ENCODE measurements at regions of chr15 and their contacts with region 1.

Region 1: DNA sequence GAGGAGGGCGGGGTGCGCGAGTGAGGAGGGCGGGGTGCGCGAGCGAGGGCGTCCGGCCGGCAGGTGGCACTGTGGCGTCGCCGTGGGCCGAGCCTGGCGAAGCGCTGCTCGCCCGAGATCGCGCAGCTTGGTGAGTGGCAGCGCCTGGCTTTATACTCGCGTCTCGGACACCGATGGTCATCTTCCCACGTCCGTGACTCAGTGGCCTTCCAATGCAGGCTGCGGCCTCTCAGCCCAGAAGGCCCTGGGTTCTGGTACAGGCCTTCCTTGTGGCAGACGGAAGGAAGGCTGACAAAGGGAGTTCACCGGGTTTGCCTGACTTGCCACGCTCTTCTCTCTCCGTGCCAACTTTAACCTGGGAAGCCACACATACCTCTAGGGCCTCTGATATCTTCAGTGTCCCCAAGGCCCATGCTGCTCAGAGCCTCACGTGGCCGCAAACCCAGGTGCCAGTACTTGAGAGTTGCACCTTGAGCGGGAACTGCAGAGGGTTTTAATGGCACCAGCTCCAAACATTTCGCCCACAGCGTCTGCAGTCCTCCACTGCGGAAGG is 195.3 kb upstream of the LYSMD4 start:
- DNase-seq: peak; percentile 83
- H3K4me3 Mint-ChIP-seq: peak overlapping the region; percentile 79
- H3K27ac Mint-ChIP-seq: peak overlapping the region; percentile 56
- H3K4me1 Mint-ChIP-seq: peaks cover 13% of the 10 kb centered on the region
- H3K27me3 Mint-ChIP-seq: no peaks in the 10 kb centered on the region

Region 2: GRCh38 chr15:99275525-99276128 is 652.9 kb before region 1 on chr15:
- CTCF ChIA-PET with region 1: no interaction called
- intact Hi-C with region 1: loop called (anchors 10 kb)
- DNase-seq: no peak
- H3K4me3 Mint-ChIP-seq: no peak overlapping the region
- H3K27ac Mint-ChIP-seq: no peak overlapping the region
- H3K4me1 Mint-ChIP-seq: peaks cover 27% of the 10 kb centered on the region
- H3K27me3 Mint-ChIP-seq: no peaks in the 10 kb centered on the region

Region 3: GRCh38 chr15:99733268-99734039 is 195.1 kb before region 1 on chr15 and contains the start of gene LYSMD4:
- CTCF ChIA-PET with region 1: no interaction called
- intact Hi-C with region 1: loop called (anchors 5 kb)
- DNase-seq: peak; percentile 99
- H3K4me3 Mint-ChIP-seq: peak within 1 kb of the TSS; percentile 81
- H3K27ac Mint-ChIP-seq: peak within 1 kb of the TSS; percentile 86
- H3K4me1 Mint-ChIP-seq: peaks cover 22% of the 10 kb centered on the region
- H3K27me3 Mint-ChIP-seq: no peaks in the 10 kb centered on the region
- total RNA-seq, gene LYSMD4: 4.9 TPM

Region 4: DNA sequence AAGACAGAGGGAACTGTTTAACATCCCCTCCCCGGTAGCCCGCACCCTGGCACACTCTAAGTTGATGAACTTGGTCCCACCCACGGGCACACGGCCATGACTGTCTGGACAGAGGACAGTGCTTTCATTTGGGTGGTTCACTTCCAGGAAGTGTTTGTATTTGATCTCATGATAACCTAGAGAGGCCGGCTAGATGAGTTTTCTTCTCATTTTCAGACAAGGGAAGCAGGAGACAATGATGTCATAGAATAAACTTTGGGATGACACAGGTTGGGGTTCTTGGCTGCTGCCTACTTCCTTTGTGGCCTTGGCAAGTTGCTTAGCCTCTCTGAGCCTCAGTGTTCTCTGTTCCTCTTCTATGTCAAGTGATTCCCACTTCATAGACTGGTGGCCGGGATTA is 179.1 kb before region 1 on chr15:
- CTCF ChIA-PET with region 1: no interaction called
- intact Hi-C with region 1: no loop called
- DNase-seq: no peak
- H3K4me3 Mint-ChIP-seq: no peak overlapping the region
- H3K27ac Mint-ChIP-seq: no peak overlapping the region
- H3K4me1 Mint-ChIP-seq: no peaks in the 10 kb centered on the region
- H3K27me3 Mint-ChIP-seq: no peaks in the 10 kb centered on the region

Region 5: GRCh38 chr15:99863550-99864198 is 64.8 kb before region 1 on chr15:
- CTCF ChIA-PET with region 1: no interaction called
- intact Hi-C with region 1: no loop called
- DNase-seq: no peak
- H3K4me3 Mint-ChIP-seq: no peak overlapping the region
- H3K27ac Mint-ChIP-seq: no peak overlapping the region
- H3K4me1 Mint-ChIP-seq: peaks cover 3% of the 10 kb centered on the region
- H3K27me3 Mint-ChIP-seq: no peaks in the 10 kb centered on the region

Region 6: DNA sequence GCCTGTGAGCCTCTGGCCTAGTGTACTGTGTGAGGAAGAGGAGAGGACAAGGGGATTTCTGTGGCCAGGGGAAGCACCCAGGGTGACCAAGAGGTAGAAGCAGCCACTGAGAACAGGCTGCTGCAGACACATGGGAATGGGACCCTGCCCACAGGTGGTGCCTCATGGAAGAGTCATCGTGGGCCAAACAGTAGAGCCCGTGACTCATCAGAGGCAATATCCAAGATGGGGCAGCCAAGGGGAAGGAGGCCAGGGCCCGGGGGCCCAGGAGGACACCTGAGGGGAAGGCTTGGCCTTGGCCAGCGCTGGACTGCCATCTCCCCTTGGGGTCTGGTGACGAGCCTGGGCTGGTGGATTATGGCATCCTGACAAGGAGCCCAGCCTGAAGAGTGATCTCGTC is 79.8 kb after region 1 on chr15:
- CTCF ChIA-PET with region 1: no interaction called
- intact Hi-C with region 1: no loop called
- DNase-seq: no peak
- H3K4me3 Mint-ChIP-seq: no peak overlapping the region
- H3K27ac Mint-ChIP-seq: no peak overlapping the region
- H3K4me1 Mint-ChIP-seq: no peaks in the 10 kb centered on the region
- H3K27me3 Mint-ChIP-seq: no peaks in the 10 kb centered on the region

Region 7: DNA sequence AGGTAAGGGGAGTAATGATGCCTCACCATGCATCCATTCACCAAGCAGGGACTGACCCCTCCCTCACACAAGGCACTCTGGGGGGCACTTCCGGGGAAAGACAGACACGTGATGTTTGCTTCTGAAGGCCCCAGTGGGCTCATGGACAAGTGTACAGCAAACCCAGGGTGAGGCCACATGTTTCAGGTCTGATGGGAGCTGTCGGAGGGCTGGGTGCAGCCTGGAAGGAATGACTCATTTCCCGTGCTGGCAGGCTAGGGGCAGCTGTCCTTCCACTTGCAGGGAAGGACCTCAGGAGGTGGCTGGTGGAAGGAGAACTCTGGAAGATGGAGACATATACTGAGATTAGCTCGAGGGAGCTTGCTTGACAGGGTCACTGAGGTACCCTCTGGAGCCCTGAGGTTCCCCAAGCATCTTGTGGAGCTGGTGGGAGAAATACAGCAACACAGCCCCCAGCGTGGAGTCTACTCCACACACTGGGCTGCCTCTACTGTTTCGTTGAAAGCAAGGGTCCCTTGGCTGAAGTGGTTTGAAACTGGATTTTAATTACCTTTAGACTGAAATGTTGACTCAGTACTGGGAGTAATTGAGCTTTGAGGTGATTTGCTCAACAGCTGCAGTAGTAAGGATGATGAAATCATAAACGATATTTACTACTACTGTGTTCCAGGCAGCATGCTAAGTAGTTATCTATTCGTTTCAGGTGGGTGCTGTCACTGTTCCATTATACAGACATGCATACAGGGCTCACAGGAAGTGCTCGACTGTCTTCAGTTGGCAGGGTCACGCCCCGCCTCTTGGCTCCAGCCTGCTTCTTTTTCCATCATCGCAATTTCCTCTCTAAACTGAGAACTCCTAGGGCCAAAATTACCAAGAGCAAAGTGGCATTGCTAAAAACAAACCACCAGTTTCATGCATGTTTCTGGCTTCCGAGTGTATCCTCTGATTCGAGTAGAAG is 182.9 kb after region 1 on chr15:
- CTCF ChIA-PET with region 1: no interaction called
- intact Hi-C with region 1: loop called (anchors 2 kb)
- DNase-seq: peak; percentile 76
- H3K4me3 Mint-ChIP-seq: peak overlapping the region; percentile 44
- H3K27ac Mint-ChIP-seq: peak overlapping the region; percentile 98
- H3K4me1 Mint-ChIP-seq: peaks cover 41% of the 10 kb centered on the region
- H3K27me3 Mint-ChIP-seq: no peaks in the 10 kb centered on the region

Region 8: DNA sequence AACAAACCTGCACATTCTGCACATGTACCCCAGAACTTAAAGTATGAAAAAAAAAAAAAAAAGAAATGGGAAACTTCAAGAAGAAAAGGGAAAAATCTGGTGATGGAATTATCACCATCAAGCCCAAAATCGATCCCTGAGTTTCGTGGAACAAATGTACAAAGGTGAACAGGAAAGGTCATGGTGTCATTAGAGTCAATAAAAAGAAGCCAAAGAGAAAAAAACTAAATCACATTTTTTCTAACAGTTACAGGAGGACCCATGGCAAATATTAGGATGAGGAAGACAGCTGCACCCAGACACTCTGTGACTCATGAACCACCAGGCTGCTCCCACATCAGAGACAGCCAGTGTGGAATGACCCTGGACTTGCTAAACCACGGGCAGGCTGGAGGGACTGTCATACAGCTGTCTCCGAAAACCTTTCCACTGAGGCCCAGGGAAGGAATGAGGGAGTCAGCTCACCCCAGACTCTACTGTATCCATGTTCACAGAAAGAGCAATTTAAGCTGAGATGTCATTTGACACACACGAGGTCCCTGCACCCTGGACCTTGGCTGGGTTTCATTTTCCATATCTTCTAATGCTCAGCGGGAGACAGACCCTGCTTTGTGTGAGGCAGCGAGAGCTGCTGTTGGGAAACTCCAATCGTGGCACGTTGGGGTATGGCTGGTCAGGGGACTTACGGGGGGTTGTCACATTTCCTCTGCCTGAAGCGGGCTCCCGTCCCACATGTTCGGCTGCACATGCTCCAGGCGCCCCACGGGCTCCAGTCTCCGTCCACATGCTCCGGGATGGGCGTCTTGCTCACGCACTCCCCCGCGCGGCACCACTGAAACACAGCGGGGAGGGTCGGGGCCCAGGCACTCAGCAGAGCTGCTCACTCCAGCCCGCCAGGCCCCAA is 203.1 kb after region 1 on chr15:
- CTCF ChIA-PET with region 1: interaction called, 4 read pairs
- intact Hi-C with region 1: loop called (anchors 2 kb)
- DNase-seq: peak; percentile 69
- H3K4me3 Mint-ChIP-seq: peak overlapping the region; percentile 47
- H3K27ac Mint-ChIP-seq: no peak overlapping the region
- H3K4me1 Mint-ChIP-seq: peaks cover 2% of the 10 kb centered on the region
- H3K27me3 Mint-ChIP-seq: no peaks in the 10 kb centered on the region

Region 9: DNA sequence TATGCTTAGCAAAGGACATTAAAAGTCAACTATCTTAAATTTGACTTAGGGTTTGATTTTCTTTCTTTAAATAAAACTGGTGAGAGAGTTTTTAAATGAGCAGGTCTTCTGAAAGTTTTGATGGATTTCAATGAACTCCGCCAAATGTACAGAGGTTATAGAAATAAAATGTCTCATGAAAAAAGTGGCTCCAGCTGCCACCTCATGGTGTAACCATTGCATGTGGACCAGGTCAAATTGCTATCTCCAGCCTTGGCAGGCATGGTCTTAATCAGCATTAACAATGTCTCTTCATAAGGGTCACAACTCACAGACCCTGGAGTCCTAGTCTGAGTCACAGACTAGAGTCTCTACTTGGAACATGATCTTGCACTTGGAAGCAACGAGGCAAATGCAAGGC is 230.9 kb after region 1 on chr15:
- CTCF ChIA-PET with region 1: no interaction called
- intact Hi-C with region 1: loop called (anchors 2 kb)
- DNase-seq: no peak
- H3K4me3 Mint-ChIP-seq: no peak overlapping the region
- H3K27ac Mint-ChIP-seq: no peak overlapping the region
- H3K4me1 Mint-ChIP-seq: no peaks in the 10 kb centered on the region
- H3K27me3 Mint-ChIP-seq: no peaks in the 10 kb centered on the region

Region 10: GRCh38 chr15:100602064-100602822 is 673.7 kb after region 1 on chr15 and contains the starts of genes ASB7 and LINS1:
- CTCF ChIA-PET with region 1: interaction called, 3 read pairs
- intact Hi-C with region 1: loop called (anchors 2 kb)
- DNase-seq: peak; percentile 99
- H3K4me3 Mint-ChIP-seq: no peak within 1 kb of the TSS
- H3K27ac Mint-ChIP-seq: no peak within 1 kb of the TSS
- H3K4me1 Mint-ChIP-seq: peaks cover 56% of the 10 kb centered on the region
- H3K27me3 Mint-ChIP-seq: no peaks in the 10 kb centered on the region
- total RNA-seq, gene ASB7: 15.6 to 16.8 TPM
- total RNA-seq, gene LINS1: 36.8 to 37.1 TPM

Measured in activated naive CD4-positive, alpha-beta T cell treated with anti-CD3 and anti-CD28 coated beads for 36 hours (primary cell).